Activated B cell treated with CpG ODN at 0.5 μM for 24 hours (primary cell): ENCODE measurements at regions of chr2 and their contacts with region 1.

Region 1: GRCh38 chr2:174697255-174697654 is 67.0 kb downstream of the CHRNA1 start:
- DNase-seq: peak; percentile 29
- ATAC-seq: peak; percentile 98
- H3K4me3 Mint-ChIP-seq: no peak overlapping the region
- H3K27ac Mint-ChIP-seq: no peak overlapping the region
- H3K4me1 Mint-ChIP-seq: peaks cover 2% of the 10 kb centered on the region
- H3K27me3 Mint-ChIP-seq: peaks cover 15% of the 10 kb centered on the region
- CTCF ChIP-seq: no peak

Region 2: GRCh38 chr2:174634130-174635014 is 62.9 kb before region 1 on chr2:
- CTCF ChIA-PET with region 1: no interaction called
- POLR2A ChIA-PET with region 1: interaction called, 14 read pairs
- intact Hi-C with region 1: no loop called
- DNase-seq: peak; percentile 29
- ATAC-seq: peak; percentile 77
- H3K4me3 Mint-ChIP-seq: peak overlapping the region; percentile 95
- H3K27ac Mint-ChIP-seq: peak overlapping the region; percentile 98
- H3K4me1 Mint-ChIP-seq: peaks cover 58% of the 10 kb centered on the region
- H3K27me3 Mint-ChIP-seq: no peaks in the 10 kb centered on the region
- CTCF ChIP-seq: no peak

Region 3: DNA sequence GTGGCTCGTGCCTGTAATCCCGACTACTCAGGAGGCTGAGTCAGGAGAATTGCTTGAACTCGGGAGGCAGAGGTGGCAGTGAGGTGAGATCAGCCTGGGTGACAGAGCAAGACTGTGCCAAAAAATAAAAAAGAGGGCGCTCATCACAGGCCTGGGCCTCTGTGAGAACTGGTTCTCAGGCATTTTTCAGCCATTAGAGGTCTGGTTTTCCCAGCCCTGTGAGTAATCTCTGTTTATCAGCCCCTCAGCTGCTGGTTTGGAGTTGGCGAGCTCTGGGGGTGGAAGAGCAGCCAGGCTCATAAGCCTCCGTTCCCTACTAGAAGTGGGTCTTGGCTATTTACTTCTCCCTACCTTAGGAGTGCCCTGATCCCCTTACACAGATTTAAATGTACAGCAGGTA is 14.0 kb after region 1 on chr2:
- CTCF ChIA-PET with region 1: interaction called, 6 read pairs
- POLR2A ChIA-PET with region 1: no interaction called
- intact Hi-C with region 1: loop called (anchors 1 kb)
- DNase-seq: no peak
- ATAC-seq: no peak
- H3K4me3 Mint-ChIP-seq: no peak overlapping the region
- H3K27ac Mint-ChIP-seq: no peak overlapping the region
- H3K4me1 Mint-ChIP-seq: no peaks in the 10 kb centered on the region
- H3K27me3 Mint-ChIP-seq: peaks cover 15% of the 10 kb centered on the region
- CTCF ChIP-seq: no peak

Region 4: DNA sequence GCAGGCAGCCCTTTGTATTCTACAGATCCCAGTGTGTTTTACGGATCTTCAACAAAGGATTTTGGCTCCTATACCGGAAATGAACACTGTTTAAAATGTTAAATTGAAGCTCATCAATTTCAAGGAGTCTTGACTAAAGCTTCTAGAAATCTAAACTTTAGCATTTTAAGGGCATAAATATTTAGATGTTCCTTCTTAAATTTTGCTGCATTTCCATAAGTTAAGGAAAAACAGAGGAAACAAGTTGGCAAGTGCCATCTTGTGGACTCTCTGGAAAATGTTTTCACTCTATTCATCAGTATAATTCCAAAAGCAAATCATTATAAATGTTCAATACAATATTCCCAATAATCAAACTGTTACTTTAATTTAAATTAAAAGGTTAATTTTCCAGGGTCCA is 288.4 kb after region 1 on chr2:
- CTCF ChIA-PET with region 1: interaction called, 3 read pairs
- POLR2A ChIA-PET with region 1: no interaction called
- intact Hi-C with region 1: loop called (anchors 1 kb)
- DNase-seq: no peak
- ATAC-seq: no peak
- H3K4me3 Mint-ChIP-seq: no peak overlapping the region
- H3K27ac Mint-ChIP-seq: no peak overlapping the region
- H3K4me1 Mint-ChIP-seq: peaks cover 2% of the 10 kb centered on the region
- H3K27me3 Mint-ChIP-seq: peaks cover 16% of the 10 kb centered on the region
- CTCF ChIP-seq: no peak